Activated CD4-positive, alpha-beta memory T cell treated with anti-CD3 and anti-CD28 coated beads for 36 hours (primary cell): ENCODE measurements at regions of chr5 and their contacts with region 1.

Region 1: DNA sequence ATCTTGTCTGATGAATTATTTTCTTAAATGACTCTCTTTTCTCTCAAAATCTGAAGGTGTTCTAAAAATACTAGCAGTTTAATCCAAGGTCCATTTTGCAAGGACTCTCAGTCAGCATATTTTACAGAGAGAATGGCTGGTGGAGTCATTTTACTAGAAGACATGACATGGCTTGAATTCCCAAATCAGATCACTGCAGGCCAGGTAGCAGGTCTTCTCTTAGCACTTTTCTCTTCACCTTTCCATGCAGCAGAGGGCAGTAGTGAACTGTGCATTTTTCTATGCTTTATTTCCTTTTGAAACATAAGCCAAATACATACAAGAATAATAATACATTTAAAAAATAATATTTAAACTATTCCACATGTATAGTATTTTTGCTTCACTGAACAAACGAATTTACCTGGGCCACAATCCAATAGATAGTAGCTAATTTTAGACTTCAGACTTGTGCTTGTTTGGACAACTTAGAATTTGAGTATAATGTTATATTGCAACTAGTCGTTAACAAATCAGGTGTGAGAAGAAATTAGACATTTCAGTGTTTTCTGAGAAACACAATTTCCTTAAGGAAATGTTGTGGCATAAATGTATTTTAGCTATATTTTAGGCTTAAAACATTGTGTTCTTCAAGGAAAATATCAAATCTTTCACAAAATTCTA is 289.4 kb upstream of the DAB2 start:
- DNase-seq: peak; percentile 29
- H3K4me3 Mint-ChIP-seq: no peak overlapping the region
- H3K27ac Mint-ChIP-seq: no peak overlapping the region
- H3K4me1 Mint-ChIP-seq: no peaks in the 10 kb centered on the region
- H3K27me3 Mint-ChIP-seq: no peaks in the 10 kb centered on the region

Region 2: DNA sequence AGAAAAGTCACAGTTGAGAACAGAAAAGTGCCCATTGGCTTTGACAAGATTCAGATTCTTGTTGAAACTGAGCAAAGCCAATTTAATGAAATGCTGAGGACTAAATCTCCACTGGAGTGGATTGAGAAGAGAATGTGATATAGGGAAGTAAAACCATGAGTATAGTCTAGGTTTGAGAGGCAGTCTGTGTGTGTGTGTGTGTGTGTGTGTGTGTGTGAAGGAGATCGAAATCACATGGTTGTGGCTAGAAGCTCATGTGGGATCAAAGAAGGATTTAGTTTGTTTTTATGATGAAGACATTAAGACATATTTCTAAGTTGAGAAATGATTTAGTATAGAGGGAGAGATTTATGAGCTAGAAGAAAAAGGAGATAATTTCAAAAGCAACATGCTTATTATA is 13.6 kb before region 1 on chr5:
- CTCF ChIA-PET with region 1: interaction called, 10 read pairs
- POLR2A ChIA-PET with region 1: no interaction called
- intact Hi-C with region 1: no loop called
- DNase-seq: no peak
- H3K4me3 Mint-ChIP-seq: no peak overlapping the region
- H3K27ac Mint-ChIP-seq: no peak overlapping the region
- H3K4me1 Mint-ChIP-seq: no peaks in the 10 kb centered on the region
- H3K27me3 Mint-ChIP-seq: no peaks in the 10 kb centered on the region

Region 3: DNA sequence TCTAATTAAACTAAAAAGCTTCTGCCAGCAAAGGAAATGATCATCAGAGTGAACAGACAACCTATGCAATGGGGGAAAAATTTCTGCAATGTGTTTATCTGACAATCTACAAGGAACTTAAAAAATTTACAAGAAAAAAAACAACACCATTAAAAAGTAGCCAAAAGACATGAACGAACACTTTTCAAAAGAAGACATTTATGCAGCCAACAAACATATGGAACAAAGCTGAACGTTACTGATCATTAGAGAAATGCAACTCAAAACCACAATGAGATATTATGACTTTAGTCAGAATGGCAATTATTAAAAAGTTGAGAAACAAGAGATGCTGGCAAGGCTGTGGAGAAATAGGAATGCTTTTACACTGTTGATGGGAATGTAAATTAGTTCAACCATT is 241.0 kb after region 1 on chr5:
- CTCF ChIA-PET with region 1: no interaction called
- POLR2A ChIA-PET with region 1: no interaction called
- intact Hi-C with region 1: no loop called
- DNase-seq: no peak
- H3K4me3 Mint-ChIP-seq: no peak overlapping the region
- H3K27ac Mint-ChIP-seq: no peak overlapping the region
- H3K4me1 Mint-ChIP-seq: no peaks in the 10 kb centered on the region
- H3K27me3 Mint-ChIP-seq: no peaks in the 10 kb centered on the region